Heart left ventricle (tissue), 16 donors: ENCODE measurements at regions of chr3 and their contacts with region 1.

Region 1: GRCh38 chr3:115245437-115245836 is 98.3 kb upstream of the ZBTB20 start:
- DNase-seq: peak in 2 of 5 donors; percentile 21 to 51
- ATAC-seq: peak in 2 of 4 donors; percentile 69 to 86
- H3K4me3 ChIP-seq: no peak overlapping the region
- H3K27ac ChIP-seq: peak overlapping the region in 5 of 12 donors; percentile 33 to 68 (median 57)
- H3K4me1 ChIP-seq: peaks cover 0 to 20% (median 4%) of the 10 kb centered on the region in 12 donors
- H3K27me3 ChIP-seq: no peaks in the 10 kb centered on the region
- CTCF ChIP-seq: no peak
- POLR2A ChIP-seq: no peak

Region 2: GRCh38 chr3:114827495-114827894 is 417.9 kb before region 1 on chr3:
- intact Hi-C with region 1: no loop called
- DNase-seq: no peak
- ATAC-seq: peak in 3 of 4 donors; percentile 66 to 68 (median 67)
- H3K4me3 ChIP-seq: no peak overlapping the region
- H3K27ac ChIP-seq: no peak overlapping the region
- H3K4me1 ChIP-seq: peaks cover 0 to 6% (median 0%) of the 10 kb centered on the region in 12 donors
- H3K27me3 ChIP-seq: no peaks in the 10 kb centered on the region
- CTCF ChIP-seq: peak; percentile 49 to 80 (median 66)
- POLR2A ChIP-seq: no peak

Region 3: GRCh38 chr3:115160295-115160694 is 85.1 kb before region 1 on chr3:
- intact Hi-C with region 1: no loop called
- DNase-seq: no peak
- ATAC-seq: no peak
- H3K4me3 ChIP-seq: no peak overlapping the region
- H3K27ac ChIP-seq: no peak overlapping the region
- H3K4me1 ChIP-seq: peaks cover 0 to 7% (median 0%) of the 10 kb centered on the region in 12 donors
- H3K27me3 ChIP-seq: no peaks in the 10 kb centered on the region
- CTCF ChIP-seq: no peak
- POLR2A ChIP-seq: no peak

Region 4: DNA sequence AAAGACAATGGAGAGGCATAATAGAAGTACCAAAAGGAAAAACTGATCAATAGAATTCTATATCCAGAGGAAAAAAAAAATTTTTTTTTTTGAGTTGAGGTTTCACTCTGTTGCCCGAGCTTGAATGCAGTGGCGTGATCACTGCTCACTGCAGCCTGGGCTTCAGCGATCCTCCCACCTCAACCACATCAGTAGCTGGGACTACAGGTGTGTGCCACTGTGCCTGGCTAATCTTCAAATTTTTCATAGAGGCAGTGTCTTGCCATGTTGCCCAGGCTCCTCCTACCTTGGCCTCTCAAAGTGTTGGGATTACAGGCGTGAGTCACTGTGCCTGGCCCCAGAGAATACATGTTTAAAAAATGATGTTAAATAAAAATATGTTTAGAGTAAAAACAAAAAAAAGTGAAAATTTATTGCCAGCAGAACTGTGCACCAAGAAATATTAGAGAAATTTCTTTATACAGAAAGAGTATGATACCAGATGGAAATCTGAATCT is 56.0 kb after region 1 on chr3:
- intact Hi-C with region 1: loop called in 1 of 10 experiments (anchors 2 kb)
- DNase-seq: no peak
- ATAC-seq: no peak
- H3K4me3 ChIP-seq: no peak overlapping the region
- H3K27ac ChIP-seq: no peak overlapping the region
- H3K4me1 ChIP-seq: no peaks in the 10 kb centered on the region
- H3K27me3 ChIP-seq: no peaks in the 10 kb centered on the region
- CTCF ChIP-seq: no peak
- POLR2A ChIP-seq: no peak